HCT116 (cell line): ENCODE measurements at regions of chr1 and their contacts with region 1.

Region 1: GRCh38 chr1:160006312-160006940 is 25.4 kb downstream of the PIGM start:
- DNase-seq: peak; percentile 64
- ATAC-seq: peak; percentile 94
- H3K4me3 ChIP-seq: no peak overlapping the region
- H3K27ac ChIP-seq: no peak overlapping the region
- H3K4me1 ChIP-seq: no peaks in the 10 kb centered on the region
- H3K27me3 ChIP-seq: no peaks in the 10 kb centered on the region
- CTCF ChIP-seq: peak; percentile 94 to 98 (median 95)
- POLR2A ChIP-seq: no peak
- RAD21 ChIP-seq: peak; percentile 88

Region 2: DNA sequence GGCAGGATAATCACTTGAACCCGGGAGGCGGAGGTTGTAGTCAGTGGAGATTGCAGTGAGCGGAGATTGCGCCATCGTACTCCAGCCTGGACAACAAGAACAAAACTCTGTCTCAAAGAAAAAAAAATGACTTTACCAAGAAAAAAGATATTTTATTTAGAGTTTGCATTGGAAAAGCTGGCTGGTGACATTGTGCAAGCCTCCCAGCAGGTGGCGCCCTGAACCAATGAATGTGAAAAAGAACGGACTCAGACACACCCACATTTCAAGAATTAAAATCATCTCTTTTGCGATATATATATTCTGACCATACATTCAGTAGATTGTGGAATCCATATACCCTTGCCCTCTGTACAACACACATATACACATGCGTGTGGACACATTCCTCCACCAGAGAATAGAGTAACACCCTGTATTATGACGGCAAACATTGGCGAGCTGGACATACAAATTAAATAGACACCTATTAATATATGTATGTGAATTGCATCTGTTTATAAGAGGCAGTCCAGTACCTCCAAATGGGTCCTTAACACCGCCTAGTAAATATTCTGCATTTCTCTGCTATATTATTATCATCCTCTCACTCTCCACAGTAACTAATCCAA is 874.0 kb before region 1 on chr1:
- CTCF ChIA-PET with region 1: interaction called, 4 read pairs
- POLR2A ChIA-PET with region 1: no interaction called
- RAD21 ChIA-PET with region 1: no interaction called
- intact Hi-C with region 1: loop called (anchors 10 kb)
- DNase-seq: peak; percentile 42
- ATAC-seq: peak; percentile 65
- H3K4me3 ChIP-seq: no peak overlapping the region
- H3K27ac ChIP-seq: no peak overlapping the region
- H3K4me1 ChIP-seq: no peaks in the 10 kb centered on the region
- H3K27me3 ChIP-seq: peaks cover 21% of the 10 kb centered on the region
- CTCF ChIP-seq: peak; percentile 73 to 85 (median 84)
- POLR2A ChIP-seq: no peak
- RAD21 ChIP-seq: peak; percentile 80

Region 3: DNA sequence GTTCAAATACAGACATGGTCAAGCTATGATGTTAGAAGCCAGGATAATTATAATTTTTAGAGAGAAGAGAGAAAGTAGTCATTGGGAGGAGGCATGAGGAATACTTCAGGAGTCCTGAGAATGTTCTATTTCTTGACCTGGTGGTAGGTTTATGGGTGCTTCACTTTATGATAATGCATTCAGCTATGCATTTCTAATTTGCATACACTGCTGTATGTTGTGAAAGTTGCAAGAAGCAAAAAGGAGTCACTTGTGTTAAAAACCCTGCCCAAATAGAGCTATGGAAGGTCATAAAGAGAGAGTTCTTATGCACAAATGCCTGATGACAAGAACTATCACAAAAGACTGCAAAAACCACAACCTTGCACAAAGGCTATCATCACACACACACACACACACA is 373.5 kb before region 1 on chr1:
- CTCF ChIA-PET with region 1: no interaction called
- POLR2A ChIA-PET with region 1: no interaction called
- RAD21 ChIA-PET with region 1: no interaction called
- intact Hi-C with region 1: no loop called
- DNase-seq: no peak
- ATAC-seq: no peak
- H3K4me3 ChIP-seq: no peak overlapping the region
- H3K27ac ChIP-seq: no peak overlapping the region
- H3K4me1 ChIP-seq: no peaks in the 10 kb centered on the region
- H3K27me3 ChIP-seq: 0 out of 2 replicates have a peak, but pooled peaks cover 3% of the 10 kb centered on the region
- CTCF ChIP-seq: no peak
- POLR2A ChIP-seq: no peak
- RAD21 ChIP-seq: no peak

Region 4: DNA sequence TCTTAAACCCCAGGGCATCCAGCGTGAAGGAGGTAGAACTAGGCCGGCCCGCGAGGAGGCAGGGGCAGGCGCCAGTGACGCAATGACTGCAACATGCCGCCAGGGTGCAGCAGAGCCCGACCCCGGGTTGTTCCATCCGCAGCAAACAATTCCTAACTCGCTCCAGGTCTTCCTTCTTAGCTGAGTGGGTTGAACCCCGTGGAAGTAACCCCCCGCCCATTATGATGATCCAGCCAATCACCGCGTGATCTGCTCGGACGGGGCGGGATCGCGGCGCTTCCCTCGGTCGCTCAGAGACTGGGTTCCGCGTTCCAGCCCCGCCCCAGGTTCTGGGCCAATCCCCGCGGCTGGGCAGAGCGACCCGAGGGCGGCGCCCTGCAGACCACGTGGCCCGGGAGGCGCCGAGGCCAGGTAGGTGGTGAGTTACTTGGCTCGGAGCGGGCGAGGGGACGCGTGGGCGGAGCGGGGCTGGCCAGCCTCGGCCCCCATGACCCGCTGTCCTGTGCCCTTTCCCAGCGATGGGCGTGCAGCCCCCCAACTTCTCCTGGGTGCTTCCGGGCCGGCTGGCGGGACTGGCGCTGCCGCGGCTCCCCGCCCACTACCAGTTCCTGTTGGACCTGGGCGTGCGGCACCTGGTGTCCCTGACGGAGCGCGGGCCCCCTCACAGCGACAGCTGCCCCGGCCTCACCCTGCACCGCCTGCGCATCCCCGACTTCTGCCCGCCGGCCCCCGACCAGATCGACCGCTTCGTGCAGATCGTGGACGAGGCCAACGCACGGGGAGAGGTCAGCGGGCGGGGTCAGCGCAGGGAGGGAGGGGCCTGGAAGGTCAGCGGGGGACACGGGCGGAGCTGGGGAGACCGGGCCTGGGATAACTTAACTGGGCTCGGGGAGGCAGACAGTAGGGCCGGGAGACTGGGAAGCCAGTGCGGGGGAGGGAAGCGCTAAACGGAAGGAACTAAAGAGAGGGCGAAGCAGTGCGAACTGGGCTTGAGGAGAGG is 225.5 kb before region 1 on chr1 and contains the start of gene DUSP23:
- CTCF ChIA-PET with region 1: interaction called, 13 read pairs
- POLR2A ChIA-PET with region 1: no interaction called
- RAD21 ChIA-PET with region 1: no interaction called
- intact Hi-C with region 1: loop called (anchors 2 kb)
- DNase-seq: peak; percentile 96
- ATAC-seq: peak; percentile 97
- H3K4me3 ChIP-seq: peak within 1 kb of the TSS; percentile 55 to 60
- H3K27ac ChIP-seq: peak within 1 kb of the TSS; percentile 65
- H3K4me1 ChIP-seq: peaks cover 3 to 21% of the 10 kb centered on the region in 2 experiments; a peak in 2 of 4 replicates
- H3K27me3 ChIP-seq: no peaks in the 10 kb centered on the region
- CTCF ChIP-seq: peak; percentile 89 to 97 (median 90)
- POLR2A ChIP-seq: no peak
- RAD21 ChIP-seq: peak; percentile 93
- total RNA-seq, gene DUSP23: 35.8 TPM

Region 5: GRCh38 chr1:159900086-159900680 is 106.2 kb before region 1 on chr1 and contains the start of gene CFAP45:
- CTCF ChIA-PET with region 1: interaction called, 249 read pairs
- POLR2A ChIA-PET with region 1: no interaction called
- RAD21 ChIA-PET with region 1: interaction called in 1 of 2 experiments, 3 read pairs
- intact Hi-C with region 1: no loop called
- DNase-seq: peak; percentile 65
- ATAC-seq: peak; percentile 92
- H3K4me3 ChIP-seq: peak within 1 kb of the TSS; percentile 22 to 34
- H3K27ac ChIP-seq: peak within 1 kb of the TSS; percentile 55
- H3K4me1 ChIP-seq: peaks cover 19% of the 10 kb centered on the region in 2 experiments
- H3K27me3 ChIP-seq: no peaks in the 10 kb centered on the region
- CTCF ChIP-seq: no peak
- POLR2A ChIP-seq: no peak
- RAD21 ChIP-seq: no peak
- total RNA-seq, gene CFAP45: 0.59 TPM

Region 6: DNA sequence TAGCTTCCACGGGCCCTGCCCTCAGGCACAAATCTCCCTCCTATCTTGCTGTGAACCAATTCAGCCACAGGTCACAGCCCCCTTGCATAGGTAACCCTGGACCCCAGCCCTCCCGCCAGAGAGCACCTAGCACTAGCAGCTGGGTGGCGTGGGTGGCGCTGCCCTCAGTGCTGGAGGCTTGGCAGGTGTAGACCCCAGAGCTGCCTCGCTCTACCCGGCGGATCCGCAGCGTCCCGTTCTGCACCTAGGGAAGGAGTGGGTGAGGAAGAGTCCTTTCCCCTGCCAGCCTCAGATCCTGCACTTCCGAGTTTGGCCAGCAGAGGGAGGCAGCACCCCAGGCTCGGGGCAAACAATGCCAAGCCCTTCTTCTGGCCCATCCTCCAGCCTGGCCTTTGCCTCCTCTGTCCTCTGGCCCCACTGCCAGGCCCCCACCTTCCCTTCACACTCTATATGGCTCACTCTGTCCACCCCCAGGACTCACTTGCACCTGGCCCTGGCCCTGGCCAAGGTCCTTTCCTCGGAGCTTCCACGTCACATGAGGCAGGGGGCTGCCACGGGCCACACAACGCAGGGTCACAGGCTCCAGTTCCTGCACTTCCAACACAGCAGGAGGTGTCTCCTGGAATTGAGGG is 70.0 kb before region 1 on chr1:
- CTCF ChIA-PET with region 1: interaction called, 170 read pairs
- POLR2A ChIA-PET with region 1: interaction called, 3 read pairs
- RAD21 ChIA-PET with region 1: interaction called in 1 of 2 experiments, 5 read pairs
- intact Hi-C with region 1: loop called (anchors 1 kb)
- DNase-seq: no peak
- ATAC-seq: peak; percentile 95
- H3K4me3 ChIP-seq: no peak overlapping the region
- H3K27ac ChIP-seq: no peak overlapping the region
- H3K4me1 ChIP-seq: peaks cover 3 to 15% of the 10 kb centered on the region in 2 experiments
- H3K27me3 ChIP-seq: no peaks in the 10 kb centered on the region
- CTCF ChIP-seq: peak; percentile 84 to 96 (median 95)
- POLR2A ChIP-seq: no peak
- RAD21 ChIP-seq: peak; percentile 98

Region 7: DNA sequence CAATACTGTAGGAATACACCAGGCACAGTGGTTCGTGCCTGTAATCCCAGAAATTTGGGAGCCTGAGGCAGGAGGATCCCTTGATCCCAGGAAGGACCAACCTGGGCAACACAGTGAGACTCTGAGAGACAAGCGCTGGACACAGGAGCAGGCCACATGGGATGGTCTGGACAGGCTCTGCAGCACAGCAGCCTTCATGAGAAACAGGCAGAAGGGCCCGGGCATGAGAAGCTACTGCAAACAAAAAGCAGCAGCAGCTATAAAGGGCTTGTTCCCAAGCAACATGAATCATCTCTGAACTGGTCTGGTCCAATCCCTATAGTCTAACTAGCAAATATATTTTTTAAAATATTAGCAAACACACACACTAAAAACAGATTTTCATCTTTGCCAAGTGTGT is 16.8 kb before region 1 on chr1:
- CTCF ChIA-PET with region 1: interaction called, 16 read pairs
- POLR2A ChIA-PET with region 1: no interaction called
- RAD21 ChIA-PET with region 1: no interaction called
- intact Hi-C with region 1: no loop called
- DNase-seq: no peak
- ATAC-seq: no peak
- H3K4me3 ChIP-seq: no peak overlapping the region
- H3K27ac ChIP-seq: no peak overlapping the region
- H3K4me1 ChIP-seq: peaks cover 0 to 4% of the 10 kb centered on the region in 2 experiments; a peak in 1 of 4 replicates
- H3K27me3 ChIP-seq: peaks cover 6% of the 10 kb centered on the region; the same call in 1 of the 2 replicates
- CTCF ChIP-seq: no peak
- POLR2A ChIP-seq: no peak
- RAD21 ChIP-seq: no peak